ENCODE measurements at regions of chr3 and their contacts with region 1.

Region 1: GRCh38 chr3:50600841-50601591 is 10.6 kb downstream of the CISH start:
- DNase-seq: peak; percentile 95
- ATAC-seq: peak; percentile 65
- H3K4me3 Mint-ChIP-seq: peak overlapping the region; percentile 61
- H3K27ac Mint-ChIP-seq: peak overlapping the region; percentile 100
- H3K4me1 Mint-ChIP-seq: peaks cover 85% of the 10 kb centered on the region
- H3K27me3 Mint-ChIP-seq: no peaks in the 10 kb centered on the region

Region 2: DNA sequence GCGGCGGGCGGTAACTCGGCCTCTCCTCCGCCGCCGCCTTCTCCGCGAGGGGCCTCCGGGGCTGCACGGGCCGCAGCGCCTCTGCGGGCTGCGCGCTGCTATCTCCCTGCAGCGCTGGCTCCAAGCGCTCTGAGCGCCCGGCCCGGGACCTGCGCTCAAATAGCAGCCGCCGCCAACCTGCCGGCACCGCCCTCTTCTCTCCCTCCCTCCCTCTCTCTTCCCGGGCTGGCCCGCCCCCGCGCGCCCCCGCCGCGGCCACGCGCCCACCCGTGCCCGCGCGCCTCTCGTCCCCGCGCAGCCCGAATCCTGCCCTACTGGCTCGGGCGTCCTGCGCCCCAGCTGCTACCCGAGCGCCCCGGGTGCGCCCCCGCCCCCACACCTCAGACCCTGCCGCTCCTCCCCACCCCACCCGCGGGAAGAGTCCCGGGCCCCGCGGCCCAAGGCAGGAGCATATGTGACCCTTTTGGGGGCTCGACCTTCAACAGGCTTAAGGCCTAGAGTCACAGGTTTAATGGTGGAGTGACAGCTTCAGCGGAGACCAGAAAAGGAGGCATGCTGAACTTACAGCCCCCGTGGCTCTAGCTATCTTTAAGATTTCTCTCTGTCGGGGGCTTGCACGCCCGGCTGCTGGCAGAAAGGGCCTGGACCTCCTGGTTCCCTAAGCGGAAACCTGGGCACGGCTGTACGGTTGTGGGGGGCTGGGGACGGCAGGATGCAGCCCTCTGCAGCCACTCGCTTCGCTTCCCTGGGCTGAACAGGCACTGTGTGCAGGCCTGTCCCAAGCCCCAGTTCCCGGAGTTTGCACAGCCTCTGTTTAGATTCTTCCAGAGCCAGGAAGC is 97.3 kb before region 1 on chr3 and contains the start of gene CACNA2D2:
- CTCF ChIA-PET with region 1: no interaction called
- DNase-seq: peak; percentile 67
- ATAC-seq: peak; percentile 90
- H3K4me3 Mint-ChIP-seq: peak within 1 kb of the TSS; percentile 20
- H3K27ac Mint-ChIP-seq: no peak within 1 kb of the TSS
- H3K4me1 Mint-ChIP-seq: peaks cover 6% of the 10 kb centered on the region
- H3K27me3 Mint-ChIP-seq: peaks cover 52% of the 10 kb centered on the region
- total RNA-seq, gene CACNA2D2: 0.56 to 1.1 TPM

Region 3: DNA sequence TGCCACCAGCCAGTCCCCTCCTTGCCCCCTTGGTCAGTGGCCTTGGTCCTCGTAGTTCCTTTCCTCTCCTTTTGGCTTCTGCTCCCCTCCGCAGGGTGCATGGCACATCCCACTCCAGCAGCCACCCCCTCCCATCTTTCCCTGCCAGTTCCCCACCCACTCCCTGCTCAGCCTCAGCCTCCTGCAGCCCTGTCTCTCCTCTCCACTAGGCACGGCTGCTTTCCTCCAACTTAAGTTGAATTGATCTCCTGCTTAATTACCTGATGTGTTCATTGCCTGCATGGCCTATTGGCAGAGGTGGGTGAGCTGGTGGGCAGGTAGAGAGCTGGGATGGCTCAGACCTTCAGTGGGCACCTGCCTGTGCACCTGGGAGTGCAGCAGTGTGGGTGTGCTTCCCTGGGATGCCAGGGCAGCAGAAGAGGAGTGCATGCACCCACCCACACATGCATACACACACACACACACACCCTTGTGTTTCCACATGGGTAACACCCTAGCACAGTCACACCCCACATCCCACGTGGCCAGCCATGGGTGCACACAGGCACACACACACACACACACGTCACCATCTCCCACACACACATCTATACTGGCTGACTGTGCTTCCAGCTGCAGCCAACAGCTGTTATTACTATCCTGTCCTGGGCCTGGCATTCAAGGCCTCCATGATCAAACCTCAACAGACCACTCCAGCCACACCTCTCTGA is 64.4 kb before region 1 on chr3:
- CTCF ChIA-PET with region 1: no interaction called
- DNase-seq: no peak
- ATAC-seq: no peak
- H3K4me3 Mint-ChIP-seq: no peak overlapping the region
- H3K27ac Mint-ChIP-seq: no peak overlapping the region
- H3K4me1 Mint-ChIP-seq: no peaks in the 10 kb centered on the region
- H3K27me3 Mint-ChIP-seq: peaks cover 33% of the 10 kb centered on the region

Region 4: GRCh38 chr3:50587806-50588758 is 12.9 kb before region 1 on chr3:
- CTCF ChIA-PET with region 1: interaction called, 164 read pairs
- DNase-seq: peak; percentile 90
- ATAC-seq: peak; percentile 41
- H3K4me3 Mint-ChIP-seq: peak overlapping the region; percentile 48
- H3K27ac Mint-ChIP-seq: peak overlapping the region; percentile 98
- H3K4me1 Mint-ChIP-seq: peaks cover 80% of the 10 kb centered on the region
- H3K27me3 Mint-ChIP-seq: no peaks in the 10 kb centered on the region